GM10248 (cell line): ENCODE measurements at regions of chr13 and their contacts with region 1.

Region 1: GRCh38 chr13:42594970-42595571 is 21.1 kb downstream of the TNFSF11 start:
- DNase-seq: peak; percentile 69
- CTCF ChIP-seq: peak; percentile 77

Region 2: DNA sequence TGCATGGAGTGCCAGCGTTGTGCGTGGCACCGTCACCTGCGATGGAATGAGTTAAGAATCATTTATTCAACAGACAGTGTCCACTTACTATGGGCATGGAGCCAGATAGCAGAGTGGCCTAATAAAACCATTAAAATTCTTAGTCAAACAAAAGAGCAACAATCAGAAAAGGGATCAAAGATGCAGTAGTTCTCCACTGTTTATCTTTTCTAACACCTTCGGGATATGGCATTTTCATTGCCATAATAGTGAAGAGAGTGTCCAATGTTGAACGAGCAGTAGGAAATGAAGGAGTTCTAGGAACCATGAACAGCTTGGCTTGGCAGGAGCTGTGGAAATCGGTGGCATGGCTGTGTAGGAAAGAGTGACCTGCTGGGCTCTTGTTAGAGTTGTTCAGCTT is 19.1 kb before region 1 on chr13:
- CTCF ChIA-PET with region 1: interaction called, 23 read pairs
- POLR2A ChIA-PET with region 1: no interaction called
- DNase-seq: no peak
- CTCF ChIP-seq: no peak

Region 3: DNA sequence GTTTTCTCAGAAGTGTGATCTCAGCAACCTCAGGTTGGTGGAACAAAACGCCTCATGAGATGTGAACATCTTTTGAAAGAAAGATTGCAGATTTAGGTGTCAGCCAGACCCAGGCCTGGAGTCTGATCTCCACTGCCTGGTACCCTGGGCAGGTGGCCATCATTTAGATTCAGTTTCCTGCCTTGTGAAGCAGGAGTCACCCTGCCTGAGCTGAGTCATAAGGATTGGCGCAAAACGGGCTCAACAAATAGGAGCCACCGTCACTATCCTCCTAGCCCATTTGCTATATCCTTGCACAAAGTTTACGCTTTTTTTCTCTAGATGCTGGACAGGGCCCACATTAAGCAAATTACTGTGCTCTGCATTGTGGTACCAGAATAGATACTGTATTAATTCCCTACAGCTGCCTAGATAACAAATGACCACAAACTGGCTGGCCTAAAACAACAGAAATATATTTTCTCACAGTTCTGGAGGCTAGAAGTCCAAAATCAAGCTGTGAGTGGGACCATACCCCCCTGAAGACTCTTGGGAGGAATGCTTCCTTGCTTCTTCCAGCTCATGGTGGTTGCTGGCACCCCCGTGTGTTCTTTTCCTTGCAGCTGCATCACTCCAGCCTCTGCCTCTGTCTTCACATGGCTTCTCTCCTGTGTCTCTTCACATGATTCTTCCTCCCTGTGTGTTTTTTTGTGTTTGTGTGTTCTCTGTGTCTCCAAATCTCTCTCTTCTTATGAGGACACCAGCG is 17.1 kb after region 1 on chr13:
- CTCF ChIA-PET with region 1: interaction called, 10 read pairs
- POLR2A ChIA-PET with region 1: no interaction called
- DNase-seq: no peak
- CTCF ChIP-seq: no peak

Region 4: DNA sequence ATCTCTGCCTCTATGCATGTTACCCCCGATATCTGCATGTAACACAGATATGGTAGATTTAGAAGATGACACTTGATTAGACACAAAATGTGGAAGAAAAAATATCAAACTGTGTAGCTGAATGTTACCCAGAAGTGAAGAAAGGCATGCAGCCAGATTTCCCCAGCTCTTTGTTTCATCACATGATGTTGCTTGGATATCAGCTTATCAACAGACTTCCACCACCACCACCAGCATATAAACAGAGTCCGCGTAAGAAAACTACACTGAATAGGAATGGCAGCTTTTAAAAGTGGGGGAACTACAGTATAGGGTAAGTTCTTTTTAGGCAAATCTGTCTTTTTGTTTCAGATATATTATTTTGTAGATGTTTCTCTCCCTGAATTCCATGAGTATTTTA is 186.3 kb after region 1 on chr13 and contains the start of gene FAM216B:
- CTCF ChIA-PET with region 1: no interaction called
- POLR2A ChIA-PET with region 1: no interaction called
- DNase-seq: no peak
- CTCF ChIP-seq: no peak